ENCODE measurements at regions of chr2 and their contacts with region 1.

Region 1: GRCh38 chr2:175282290-175282689 is 100.8 kb upstream of the ATP5MC3 start:
- DNase-seq: no peak
- H3K4me3 Mint-ChIP-seq: no peak overlapping the region
- H3K27ac Mint-ChIP-seq: no peak overlapping the region
- H3K4me1 Mint-ChIP-seq: no peaks in the 10 kb centered on the region
- H3K27me3 Mint-ChIP-seq: peaks cover 5% of the 10 kb centered on the region

Region 2: DNA sequence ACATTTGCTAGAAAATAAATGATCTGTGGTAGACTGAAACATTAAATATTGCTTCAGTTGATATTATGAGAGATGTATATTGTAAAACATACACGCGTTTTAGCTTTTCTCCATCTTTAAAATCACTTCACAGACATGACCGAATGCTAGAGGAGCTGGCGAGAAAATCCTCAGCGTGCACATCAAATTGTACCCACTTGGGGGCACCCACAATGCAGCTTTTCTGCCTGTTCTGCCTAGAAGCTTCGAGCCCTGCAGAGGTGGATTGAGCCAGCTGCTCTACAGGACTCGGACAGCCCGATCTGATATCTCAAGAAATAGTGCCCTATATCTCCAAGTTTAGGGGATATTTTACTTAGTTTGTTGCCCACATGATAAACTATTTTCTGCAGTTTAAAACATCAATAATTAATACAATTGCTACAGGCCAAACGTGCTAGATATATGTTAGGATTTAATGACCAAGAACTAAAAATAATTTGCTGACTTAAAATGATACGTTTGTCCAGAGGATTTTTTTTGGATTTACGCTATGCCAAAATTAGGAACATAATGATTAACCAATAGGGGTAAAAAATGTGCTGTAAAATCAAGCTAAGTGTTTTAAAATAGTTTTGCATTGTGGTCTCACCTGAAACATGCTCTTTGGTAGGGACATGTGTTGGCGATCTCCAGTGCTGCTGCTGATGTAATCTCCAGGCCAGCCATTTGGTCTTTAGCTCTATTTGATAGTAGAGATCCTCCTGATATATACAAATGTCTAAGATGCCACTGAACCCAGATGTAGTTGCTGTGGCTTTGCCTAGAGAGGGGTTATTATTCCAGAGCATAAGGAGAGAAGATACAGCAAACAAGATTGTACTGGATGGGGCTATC is 78.4 kb before region 1 on chr2:
- CTCF ChIA-PET with region 1: interaction called, 21 read pairs
- DNase-seq: peak; percentile 57
- H3K4me3 Mint-ChIP-seq: no peak overlapping the region
- H3K27ac Mint-ChIP-seq: no peak overlapping the region
- H3K4me1 Mint-ChIP-seq: peaks cover 4% of the 10 kb centered on the region
- H3K27me3 Mint-ChIP-seq: peaks cover 8% of the 10 kb centered on the region

Region 3: DNA sequence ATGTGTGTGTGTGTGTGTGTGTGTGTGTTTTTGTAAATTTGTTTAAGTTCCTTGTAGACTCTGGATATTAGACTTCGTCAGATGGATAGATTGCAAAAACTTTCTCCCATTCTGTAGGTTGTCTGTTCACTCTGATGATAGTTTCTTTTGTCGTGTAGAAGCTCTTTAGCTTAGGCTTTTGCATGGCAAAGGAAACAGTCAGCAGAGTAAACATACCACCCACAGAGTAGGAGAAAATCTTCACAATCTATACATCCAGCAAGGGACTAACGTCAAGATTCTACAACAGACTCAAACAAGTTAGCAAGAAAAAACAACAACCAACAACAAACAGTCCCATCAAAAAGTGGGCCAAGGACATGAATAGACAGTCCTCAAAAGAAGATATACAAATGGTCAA is 235.9 kb after region 1 on chr2:
- CTCF ChIA-PET with region 1: no interaction called
- DNase-seq: no peak
- H3K4me3 Mint-ChIP-seq: no peak overlapping the region
- H3K27ac Mint-ChIP-seq: no peak overlapping the region
- H3K4me1 Mint-ChIP-seq: no peaks in the 10 kb centered on the region
- H3K27me3 Mint-ChIP-seq: no peaks in the 10 kb centered on the region